Activated CD4-positive, alpha-beta memory T cell treated with anti-CD3 and anti-CD28 coated beads for 36 hours (primary cell): ENCODE measurements at regions of chr19 and their contacts with region 1.

Region 1: DNA sequence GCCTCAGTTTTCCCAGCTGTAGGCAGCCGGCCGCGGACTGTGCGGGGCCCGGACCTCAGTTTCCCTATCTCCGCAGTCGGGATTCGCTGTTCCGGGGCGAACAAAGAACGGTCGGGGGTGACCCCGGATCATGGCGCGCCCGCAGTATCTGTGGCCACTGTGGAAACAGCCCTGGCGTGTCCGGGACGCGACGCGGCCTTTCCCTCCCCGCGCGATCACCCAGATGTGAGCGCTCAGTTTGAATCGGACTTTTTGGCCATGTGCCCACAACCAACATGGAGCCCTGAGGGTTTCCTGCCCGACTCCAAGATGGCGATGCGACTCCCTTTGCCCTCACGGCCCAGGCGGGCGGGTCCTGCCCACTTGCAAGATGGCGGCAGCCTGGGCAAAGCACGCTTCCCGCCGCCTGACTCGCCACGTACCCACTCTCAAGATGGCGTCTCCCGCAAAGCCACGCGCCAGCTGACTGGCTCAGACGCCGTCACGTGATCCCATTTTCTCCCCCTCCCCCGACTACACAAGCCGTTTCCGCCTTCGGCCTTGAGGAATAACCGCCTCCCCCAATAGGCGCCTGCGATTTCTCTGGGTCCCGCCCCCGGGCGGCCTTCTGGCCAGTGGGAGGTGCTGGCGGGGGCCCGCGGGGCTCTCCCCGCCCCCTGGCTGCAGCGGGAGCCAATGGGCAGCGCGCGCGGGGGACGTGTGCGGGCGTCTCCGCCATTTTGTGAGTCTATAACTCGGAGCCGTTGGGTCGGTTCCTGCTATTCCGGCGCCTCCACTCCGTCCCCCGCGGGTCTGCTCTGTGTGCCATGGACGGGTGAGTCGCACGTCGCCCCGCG is at the start of gene PTBP1:
- DNase-seq: peak; percentile 100
- H3K4me3 Mint-ChIP-seq: peak within 1 kb of the TSS; percentile 93
- H3K27ac Mint-ChIP-seq: peak within 1 kb of the TSS; percentile 90
- H3K4me1 Mint-ChIP-seq: peaks cover 22% of the 10 kb centered on the region
- H3K27me3 Mint-ChIP-seq: no peaks in the 10 kb centered on the region
- total RNA-seq, gene PTBP1: 464 to 465 TPM

Region 2: GRCh38 chr19:572140-572742 is 224.7 kb before region 1 on chr19 and contains the start of gene BSG:
- CTCF ChIA-PET with region 1: no interaction called
- POLR2A ChIA-PET with region 1: no interaction called
- intact Hi-C with region 1: loop called (anchors 1 kb)
- DNase-seq: peak; percentile 99
- H3K4me3 Mint-ChIP-seq: peak within 1 kb of the TSS; percentile 92
- H3K27ac Mint-ChIP-seq: peak within 1 kb of the TSS; percentile 93
- H3K4me1 Mint-ChIP-seq: peaks cover 35% of the 10 kb centered on the region
- H3K27me3 Mint-ChIP-seq: no peaks in the 10 kb centered on the region
- total RNA-seq, gene BSG: 185 to 205 TPM

Region 3: GRCh38 chr19:662962-663681 is 133.8 kb before region 1 on chr19 and contains the start of gene RNF126:
- CTCF ChIA-PET with region 1: no interaction called
- POLR2A ChIA-PET with region 1: interaction called, 6 read pairs
- intact Hi-C with region 1: loop called (anchors 2 kb)
- DNase-seq: peak; percentile 97
- H3K4me3 Mint-ChIP-seq: peak within 1 kb of the TSS; percentile 93
- H3K27ac Mint-ChIP-seq: peak within 1 kb of the TSS; percentile 95
- H3K4me1 Mint-ChIP-seq: peaks cover 40% of the 10 kb centered on the region
- H3K27me3 Mint-ChIP-seq: no peaks in the 10 kb centered on the region
- total RNA-seq, gene RNF126: 84.4 to 89.7 TPM

Region 4: DNA sequence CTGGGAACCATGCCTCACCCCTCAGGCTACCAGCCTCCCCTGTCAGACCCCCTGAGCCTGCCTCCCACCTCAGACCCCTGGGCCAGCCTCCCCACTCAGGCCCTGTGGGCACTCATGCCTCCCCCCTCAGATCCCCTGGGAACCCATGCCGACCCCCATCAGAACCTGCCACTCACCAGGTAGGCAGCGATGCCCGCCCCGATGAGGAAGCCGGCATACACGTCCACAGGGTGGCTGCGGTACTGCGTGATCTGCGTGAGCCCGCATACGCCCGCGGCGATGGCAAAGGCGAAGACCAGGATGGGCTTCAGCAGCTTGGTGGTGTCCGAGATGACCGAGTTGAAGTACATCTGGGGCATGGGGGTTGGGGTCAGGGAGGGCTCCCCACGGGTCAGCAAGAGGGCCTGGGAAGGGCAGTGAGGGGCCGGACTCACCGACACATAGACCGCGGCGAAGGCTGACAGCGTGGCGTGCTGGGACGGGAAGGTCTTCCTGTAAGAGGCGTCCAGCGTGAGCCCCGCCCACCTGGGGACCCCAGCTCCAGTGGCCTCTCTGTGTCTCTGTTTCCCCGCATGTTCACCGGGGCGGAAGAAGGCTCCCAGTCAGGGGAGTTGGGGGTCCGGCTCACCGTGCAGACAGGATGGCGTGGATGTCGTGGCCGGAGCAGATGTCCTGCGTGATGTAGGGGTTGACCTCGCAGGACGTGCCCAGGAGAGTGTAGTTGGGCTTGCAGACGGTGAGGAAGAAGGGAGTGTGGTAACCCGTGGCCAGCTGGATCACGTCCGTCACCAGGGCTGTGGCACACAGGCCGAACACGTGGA is 17.6 kb after region 1 on chr19:
- CTCF ChIA-PET with region 1: no interaction called
- POLR2A ChIA-PET with region 1: interaction called, 12 read pairs
- intact Hi-C with region 1: no loop called
- DNase-seq: no peak
- H3K4me3 Mint-ChIP-seq: no peak overlapping the region
- H3K27ac Mint-ChIP-seq: no peak overlapping the region
- H3K4me1 Mint-ChIP-seq: no peaks in the 10 kb centered on the region
- H3K27me3 Mint-ChIP-seq: no peaks in the 10 kb centered on the region

Region 5: DNA sequence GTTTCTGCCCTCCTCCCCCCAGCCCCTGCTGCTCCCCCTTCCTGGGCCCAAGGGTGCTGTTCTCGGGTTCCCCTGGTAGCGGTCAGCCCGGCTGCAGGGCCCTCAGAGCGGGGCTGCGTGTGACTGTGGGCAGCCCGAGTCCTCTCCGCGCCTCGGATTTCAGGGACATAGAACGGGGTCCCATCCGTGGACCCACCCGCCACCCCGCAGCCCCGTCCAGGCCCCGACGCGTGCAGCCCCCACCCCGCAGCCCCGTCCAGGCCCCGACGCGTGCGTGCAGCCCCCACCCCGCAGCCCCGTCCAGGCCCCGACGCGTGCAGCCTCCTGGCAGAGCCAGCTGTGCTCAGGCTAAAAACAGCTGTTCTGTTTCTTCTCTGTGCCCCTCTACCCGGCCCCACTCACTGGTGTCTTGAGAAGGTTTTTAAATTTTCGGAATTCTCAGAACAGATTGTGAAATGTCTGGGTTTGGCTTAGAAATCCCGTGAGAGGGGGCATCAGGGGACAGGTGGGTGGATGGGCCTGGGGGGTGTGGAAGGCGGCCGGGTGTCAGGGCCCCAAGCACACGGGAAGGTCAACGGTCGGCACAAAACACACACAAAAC is 38.4 kb after region 1 on chr19:
- CTCF ChIA-PET with region 1: no interaction called
- POLR2A ChIA-PET with region 1: no interaction called
- intact Hi-C with region 1: no loop called
- DNase-seq: no peak
- H3K4me3 Mint-ChIP-seq: no peak overlapping the region
- H3K27ac Mint-ChIP-seq: no peak overlapping the region
- H3K4me1 Mint-ChIP-seq: peaks cover 3% of the 10 kb centered on the region
- H3K27me3 Mint-ChIP-seq: peaks cover 7% of the 10 kb centered on the region

Region 6: GRCh38 chr19:892243-893050 is 95.5 kb after region 1 on chr19:
- CTCF ChIA-PET with region 1: no interaction called
- POLR2A ChIA-PET with region 1: no interaction called
- intact Hi-C with region 1: loop called (anchors 1 kb)
- DNase-seq: no peak
- H3K4me3 Mint-ChIP-seq: peak overlapping the region; percentile 83
- H3K27ac Mint-ChIP-seq: peak overlapping the region; percentile 74
- H3K4me1 Mint-ChIP-seq: peaks cover 11% of the 10 kb centered on the region
- H3K27me3 Mint-ChIP-seq: peaks cover 3% of the 10 kb centered on the region

Region 7: GRCh38 chr19:1020868-1021425 is 224.0 kb after region 1 on chr19 and contains the start of gene TMEM259:
- CTCF ChIA-PET with region 1: no interaction called
- POLR2A ChIA-PET with region 1: no interaction called
- intact Hi-C with region 1: loop called (anchors 1 kb)
- DNase-seq: peak; percentile 98
- H3K4me3 Mint-ChIP-seq: peak within 1 kb of the TSS; percentile 95
- H3K27ac Mint-ChIP-seq: peak within 1 kb of the TSS; percentile 99
- H3K4me1 Mint-ChIP-seq: peaks cover 43% of the 10 kb centered on the region
- H3K27me3 Mint-ChIP-seq: peaks cover 3% of the 10 kb centered on the region
- total RNA-seq, gene TMEM259: 107 to 109 TPM

Region 8: DNA sequence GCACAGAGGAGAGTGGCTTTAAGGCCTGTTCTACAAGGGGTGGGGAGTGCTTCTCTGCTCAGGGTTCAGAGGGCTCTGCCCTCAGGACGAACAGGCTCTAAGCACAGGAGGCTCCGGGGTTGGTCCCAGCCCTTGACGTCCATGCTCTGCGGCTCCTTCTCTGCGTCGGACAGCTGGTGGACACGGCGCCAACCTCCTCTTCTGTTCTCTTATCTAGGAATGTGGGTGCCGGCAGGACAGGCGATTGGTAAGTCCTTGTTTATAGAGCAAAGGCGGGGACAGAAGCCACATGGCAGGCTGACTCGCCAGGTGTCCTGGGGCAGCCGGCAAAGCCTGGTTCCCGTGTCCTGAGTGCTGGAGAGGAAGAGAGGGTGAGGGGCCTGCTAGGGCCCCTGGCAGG is 632.8 kb after region 1 on chr19:
- CTCF ChIA-PET with region 1: no interaction called
- POLR2A ChIA-PET with region 1: no interaction called
- intact Hi-C with region 1: no loop called
- DNase-seq: no peak
- H3K4me3 Mint-ChIP-seq: no peak overlapping the region
- H3K27ac Mint-ChIP-seq: no peak overlapping the region
- H3K4me1 Mint-ChIP-seq: no peaks in the 10 kb centered on the region
- H3K27me3 Mint-ChIP-seq: no peaks in the 10 kb centered on the region